ENCODE measurements at regions of chr11 and their contacts with region 1.

Region 1: DNA sequence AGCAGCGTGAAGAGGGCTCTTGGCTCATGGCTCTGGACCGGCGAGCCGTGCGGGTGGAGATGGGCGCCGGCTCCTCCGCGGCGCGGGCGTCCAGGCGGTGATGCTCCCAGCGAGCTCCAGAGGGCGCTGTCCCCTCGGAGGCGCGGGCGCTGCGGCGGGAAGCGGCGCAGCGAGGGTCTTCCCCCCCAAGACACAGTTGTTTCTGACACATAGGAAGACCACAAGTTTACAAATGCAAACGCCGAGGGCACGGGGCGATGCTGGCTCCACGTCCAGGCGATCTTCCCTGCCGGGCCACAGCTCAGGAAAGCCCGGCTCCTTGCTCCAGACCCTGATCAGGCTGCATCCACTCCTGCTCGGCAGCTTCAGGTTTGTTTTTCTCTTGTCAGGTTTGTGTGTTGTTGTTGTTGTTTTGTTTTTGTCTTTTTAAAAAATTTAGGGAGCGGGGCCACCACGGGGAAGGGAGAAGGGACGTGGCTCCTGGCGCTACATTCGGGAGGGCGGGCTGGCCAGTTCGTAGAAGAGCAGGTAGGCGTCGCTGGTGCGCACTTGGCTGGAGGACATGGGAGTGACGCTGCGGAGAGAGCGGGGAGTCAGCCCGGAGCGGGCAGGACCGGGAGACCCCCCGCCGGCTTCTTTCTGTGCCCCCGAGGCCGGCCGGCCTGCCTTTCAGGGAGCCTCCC is 10.0 kb upstream of the MFRP start:
- DNase-seq: peak; percentile 42 to 85 (median 66)
- ATAC-seq: peak; percentile 92 to 96 (median 94)
- H3K4me3 ChIP-seq: peak overlapping the region; percentile 47 to 97
- H3K4me3 Mint-ChIP-seq: peak overlapping the region; percentile 81 to 89 (median 83)
- H3K27ac ChIP-seq: no peak overlapping the region
- H3K27ac Mint-ChIP-seq: peak overlapping the region in 1 of 2 donors; percentile 16
- H3K4me1 ChIP-seq: peaks cover 0 to 11% of the 10 kb centered on the region in 2 experiments
- H3K4me1 Mint-ChIP-seq: peaks cover 2 to 9% (median 7%) of the 10 kb centered on the region in 3 donors
- H3K27me3 ChIP-seq: peaks cover 5 to 37% of the 10 kb centered on the region in 2 experiments
- H3K27me3 Mint-ChIP-seq: peaks cover 15 to 20% of the 10 kb centered on the region in 2 donors

Region 2: DNA sequence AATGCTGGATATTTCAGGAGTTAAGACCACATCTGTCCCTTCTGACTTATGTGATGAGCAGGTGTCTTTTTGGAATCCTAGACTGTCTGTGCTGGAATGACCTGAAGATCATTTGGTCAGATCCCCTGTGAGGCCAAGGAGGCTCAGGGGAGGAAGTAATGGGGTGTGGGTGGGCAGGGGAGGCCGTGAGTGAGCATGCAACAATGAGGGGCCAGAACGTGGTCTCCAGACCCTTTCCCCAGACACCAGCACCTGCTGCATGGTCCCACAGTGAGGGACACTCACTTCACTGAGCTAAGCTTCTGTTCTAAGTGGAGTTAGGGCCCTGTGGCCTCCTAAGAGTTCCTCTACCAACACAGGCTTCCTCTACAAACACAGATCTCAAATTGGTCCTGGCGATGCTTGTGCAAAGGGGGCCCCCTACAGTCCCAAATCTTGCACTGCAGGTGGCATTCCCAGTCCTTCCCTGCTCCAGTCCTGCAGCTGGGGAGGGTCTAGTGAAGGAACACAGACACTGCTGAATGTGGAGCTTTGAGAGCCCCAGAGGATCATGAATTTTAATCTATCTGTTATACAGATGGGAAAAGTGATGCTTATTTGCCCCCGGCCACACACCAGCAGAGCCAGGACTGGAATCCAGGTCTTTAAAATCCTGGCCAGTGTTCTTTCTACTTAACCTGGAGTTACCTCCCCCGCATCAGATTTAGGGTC is 17.6 kb after region 1 on chr11:
- CTCF ChIA-PET with region 1: interaction called, 14 to 16 read pairs
- POLR2A ChIA-PET with region 1: no interaction called
- DNase-seq: peak in 8 of 35 experiments; percentile 13 to 63 (median 32)
- ATAC-seq: peak in 3 of 4 experiments; percentile 43 to 63 (median 60)
- H3K4me3 ChIP-seq: no peak overlapping the region
- H3K4me3 Mint-ChIP-seq: no peak overlapping the region
- H3K27ac ChIP-seq: no peak overlapping the region
- H3K27ac Mint-ChIP-seq: no peak overlapping the region
- H3K4me1 ChIP-seq: peaks cover 0 to 23% of the 10 kb centered on the region in 2 experiments
- H3K4me1 Mint-ChIP-seq: peaks cover 6 to 14% (median 12%) of the 10 kb centered on the region in 3 donors
- H3K27me3 ChIP-seq: peaks cover 0 to 40% of the 10 kb centered on the region in 2 experiments
- H3K27me3 Mint-ChIP-seq: peaks cover 9 to 16% of the 10 kb centered on the region in 2 donors

Region 3: DNA sequence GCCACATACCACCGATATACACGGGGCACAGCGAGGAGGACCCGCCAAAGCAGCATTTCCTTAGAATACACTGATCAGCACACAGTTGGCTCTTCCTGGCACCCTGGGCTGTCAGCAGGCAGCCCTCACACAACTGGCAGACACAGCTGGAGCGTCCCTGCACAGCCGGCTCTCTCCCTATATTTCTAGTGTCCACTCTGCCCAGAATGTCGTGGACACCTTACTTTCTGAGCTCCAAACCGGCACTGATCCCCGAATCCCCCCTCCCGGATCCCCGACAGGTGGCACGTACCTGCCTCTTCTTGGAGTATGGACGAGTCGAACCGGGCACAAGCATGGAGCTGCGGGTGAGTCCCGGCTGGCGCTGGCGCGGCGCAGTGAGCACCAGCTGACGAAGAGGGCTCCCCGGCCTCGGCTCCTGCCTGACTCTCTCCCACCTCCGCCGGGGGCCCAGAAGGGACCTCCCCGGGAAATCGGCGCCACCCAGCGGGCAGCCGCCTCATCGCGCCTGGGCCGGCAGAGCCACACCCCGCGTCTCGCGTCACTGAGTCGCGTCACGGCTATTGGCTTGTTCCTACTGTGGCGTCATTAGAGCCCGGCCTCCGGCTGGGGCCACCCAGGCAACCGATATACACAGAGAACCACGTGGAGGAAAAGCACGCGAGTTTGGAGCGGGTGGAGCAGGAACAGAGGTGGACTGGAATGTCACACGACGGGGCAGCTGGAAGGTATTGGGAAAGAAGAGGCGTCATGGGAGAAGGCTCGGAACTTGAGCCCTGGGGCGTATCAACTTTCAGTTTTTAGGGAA is 24.9 kb after region 1 on chr11 and contains the start of gene USP2:
- CTCF ChIA-PET with region 1: interaction called, 17 to 19 read pairs
- POLR2A ChIA-PET with region 1: no interaction called
- DNase-seq: peak; percentile 91 to 99 (median 95)
- ATAC-seq: peak; percentile 98 to 100 (median 98)
- H3K4me3 ChIP-seq: peak within 1 kb of the TSS; percentile 62 to 75
- H3K4me3 Mint-ChIP-seq: no peak within 1 kb of the TSS
- H3K27ac ChIP-seq: no peak within 1 kb of the TSS
- H3K27ac Mint-ChIP-seq: peak within 1 kb of the TSS in 1 of 2 donors; percentile 29
- H3K4me1 ChIP-seq: peaks cover 10 to 20% of the 10 kb centered on the region in 2 experiments
- H3K4me1 Mint-ChIP-seq: peaks cover 0 to 5% (median 5%) of the 10 kb centered on the region in 3 donors
- H3K27me3 ChIP-seq: peaks cover 3 to 23% of the 10 kb centered on the region in 2 experiments
- H3K27me3 Mint-ChIP-seq: no peaks in the 10 kb centered on the region
- total RNA-seq, gene USP2: 0.13 to 3.2 (median 0.44) TPM

Region 4: DNA sequence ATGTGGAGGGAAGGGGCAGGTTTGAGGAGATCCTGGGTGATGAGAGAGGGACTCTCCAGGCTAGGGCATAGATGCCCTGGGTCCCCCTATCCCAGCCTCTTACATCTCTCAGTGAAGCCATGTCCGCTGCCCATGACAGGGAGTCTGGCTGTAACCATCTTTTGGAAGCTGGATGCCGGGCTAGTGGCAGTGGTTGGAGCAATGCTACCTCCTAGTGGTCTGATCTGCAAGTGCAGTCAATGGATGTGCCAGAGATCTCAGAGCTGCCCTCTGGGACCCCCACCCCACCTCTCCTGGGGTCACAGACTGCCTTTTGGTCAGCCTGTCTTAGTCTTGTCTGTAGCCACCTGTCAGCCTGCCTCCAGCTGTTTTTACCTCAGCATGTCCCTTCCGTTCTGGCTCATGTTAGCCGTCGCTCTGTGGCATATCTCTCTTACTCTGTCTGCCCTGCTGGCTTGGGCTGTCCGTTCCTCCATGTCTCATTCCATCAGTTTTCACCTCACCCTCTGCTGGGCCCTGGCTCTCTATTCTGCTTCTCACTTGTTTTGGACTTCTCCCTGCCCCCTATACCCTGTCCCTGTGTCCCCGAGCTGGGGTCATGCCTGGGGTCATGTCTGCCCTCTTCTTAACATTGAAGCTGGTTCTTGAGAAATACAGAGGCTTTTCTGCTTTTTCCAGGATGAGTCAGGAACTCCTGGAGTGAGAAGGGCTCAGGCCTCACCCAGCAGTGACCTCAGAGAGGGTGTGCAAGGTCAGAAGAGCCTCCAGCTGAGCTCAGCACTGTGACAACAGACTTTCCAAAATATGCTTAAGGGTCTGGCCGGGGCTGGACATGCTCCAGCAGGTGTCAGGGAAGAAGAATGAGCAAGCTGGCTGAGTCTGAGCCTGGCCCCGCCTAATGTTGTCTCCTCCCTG is 118.4 kb after region 1 on chr11:
- CTCF ChIA-PET with region 1: interaction called, 5 to 21 read pairs
- POLR2A ChIA-PET with region 1: no interaction called
- DNase-seq: peak in 27 of 35 experiments; percentile 13 to 72 (median 32)
- ATAC-seq: peak; percentile 36 to 48 (median 38)
- H3K4me3 ChIP-seq: no peak overlapping the region
- H3K4me3 Mint-ChIP-seq: no peak overlapping the region
- H3K27ac ChIP-seq: no peak overlapping the region
- H3K27ac Mint-ChIP-seq: no peak overlapping the region
- H3K4me1 ChIP-seq: no peaks in the 10 kb centered on the region
- H3K4me1 Mint-ChIP-seq: no peaks in the 10 kb centered on the region
- H3K27me3 ChIP-seq: peaks cover 0 to 53% of the 10 kb centered on the region in 2 experiments
- H3K27me3 Mint-ChIP-seq: peaks cover 34 to 49% of the 10 kb centered on the region in 2 donors